ENCODE measurements at regions of chr9 and their contacts with region 1.

Region 1: DNA sequence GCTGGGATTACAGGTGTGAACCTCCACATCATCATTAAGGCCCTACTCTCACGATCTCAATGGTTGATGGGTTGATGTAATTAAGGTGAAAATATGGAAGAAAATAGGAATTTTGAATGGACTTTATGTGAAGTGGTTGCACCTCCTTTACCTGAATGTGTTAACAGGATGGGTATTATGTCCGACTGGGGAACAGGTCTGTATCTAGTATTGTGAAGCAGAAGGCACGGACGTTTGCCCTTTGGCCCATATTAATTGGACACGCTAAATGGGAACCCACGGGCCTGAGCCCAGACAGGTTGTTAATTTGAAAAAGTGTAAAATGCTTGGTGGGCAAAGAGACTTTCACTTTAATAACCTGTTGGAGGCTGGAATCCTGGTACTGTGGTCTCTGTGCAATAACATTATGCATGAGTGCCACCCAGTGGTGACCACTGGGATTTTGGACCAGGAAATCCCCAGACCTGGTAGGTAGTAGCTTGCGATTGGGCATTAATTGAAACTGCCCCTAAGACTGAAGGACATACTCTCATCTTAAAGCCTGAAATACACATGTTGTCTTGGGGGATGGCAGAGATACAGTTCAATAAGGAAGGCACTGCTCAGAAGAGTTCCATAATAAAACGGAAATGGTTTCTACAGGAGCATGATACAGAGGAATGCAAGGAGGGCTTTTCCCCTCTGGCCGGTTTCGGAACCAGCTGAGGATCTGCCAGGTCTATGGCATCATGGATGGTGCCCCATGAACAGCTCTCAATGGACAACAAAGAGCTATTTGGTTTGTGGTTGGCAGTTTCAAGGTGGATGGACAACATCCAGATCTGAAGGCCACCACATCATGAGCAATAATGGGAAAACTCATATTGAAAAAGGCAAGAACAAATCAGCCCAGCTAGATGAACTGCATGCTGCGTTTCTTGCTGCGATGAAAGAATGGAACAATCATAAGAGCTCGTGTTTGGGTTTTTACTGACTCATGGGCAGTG is 26.2 kb upstream of the BICD2 start:
- DNase-seq: peak in 1 of 2 experiments; percentile 87
- H3K4me3 ChIP-seq: no peak overlapping the region
- H3K27ac ChIP-seq: no peak overlapping the region
- H3K4me1 ChIP-seq: peaks cover 0 to 2% (median 0%) of the 10 kb centered on the region in 4 experiments; a peak in 1 of 7 replicates
- H3K27me3 ChIP-seq: no peaks in the 10 kb centered on the region
- CTCF ChIP-seq: peak; percentile 65 to 90 (median 86)
- EP300 ChIP-seq: no peak
- POLR2A ChIP-seq: no peak
- RAD21 ChIP-seq: peak; percentile 94 to 97

Region 2: DNA sequence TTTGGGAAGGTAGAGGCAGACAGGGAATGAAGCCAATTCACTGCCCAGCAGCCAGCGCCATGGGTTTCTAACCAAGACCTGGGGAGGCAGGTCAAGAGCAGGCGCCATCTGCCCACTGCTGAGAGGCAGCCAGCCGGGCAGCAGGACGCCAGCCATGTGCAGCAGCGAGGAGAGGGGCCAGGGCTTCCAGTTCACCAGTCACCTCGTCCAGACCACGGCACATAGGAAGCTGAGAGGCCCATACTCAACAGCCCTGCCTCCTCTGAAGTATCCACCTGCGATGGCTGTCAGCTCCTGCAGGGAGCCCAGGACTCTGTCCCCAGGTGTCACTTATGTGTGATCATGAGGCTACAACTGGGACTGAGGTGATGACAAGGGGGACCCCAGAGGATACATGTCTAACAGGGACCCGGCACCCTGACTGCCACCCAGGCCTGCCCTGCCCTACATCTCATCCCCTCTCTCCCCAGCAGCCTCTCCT is 151.0 kb before region 1 on chr9:
- CTCF ChIA-PET with region 1: no interaction called
- POLR2A ChIA-PET with region 1: no interaction called
- DNase-seq: no peak
- H3K4me3 ChIP-seq: no peak overlapping the region
- H3K27ac ChIP-seq: no peak overlapping the region
- H3K4me1 ChIP-seq: no peaks in the 10 kb centered on the region
- H3K27me3 ChIP-seq: no peaks in the 10 kb centered on the region
- CTCF ChIP-seq: no peak
- EP300 ChIP-seq: no peak
- POLR2A ChIP-seq: no peak
- RAD21 ChIP-seq: no peak

Region 3: GRCh38 chr9:92728831-92729734 is 61.8 kb before region 1 on chr9:
- CTCF ChIA-PET with region 1: interaction called, 142 read pairs
- POLR2A ChIA-PET with region 1: no interaction called
- DNase-seq: peak in 1 of 2 experiments; percentile 39
- H3K4me3 ChIP-seq: no peak overlapping the region
- H3K27ac ChIP-seq: no peak overlapping the region
- H3K4me1 ChIP-seq: peaks cover 0 to 1% (median 0%) of the 10 kb centered on the region in 4 experiments; a peak in 1 of 7 replicates
- H3K27me3 ChIP-seq: no peaks in the 10 kb centered on the region
- CTCF ChIP-seq: peak; percentile 64 to 66 (median 66)
- EP300 ChIP-seq: no peak
- POLR2A ChIP-seq: no peak
- RAD21 ChIP-seq: peak; percentile 65 to 69

Region 4: DNA sequence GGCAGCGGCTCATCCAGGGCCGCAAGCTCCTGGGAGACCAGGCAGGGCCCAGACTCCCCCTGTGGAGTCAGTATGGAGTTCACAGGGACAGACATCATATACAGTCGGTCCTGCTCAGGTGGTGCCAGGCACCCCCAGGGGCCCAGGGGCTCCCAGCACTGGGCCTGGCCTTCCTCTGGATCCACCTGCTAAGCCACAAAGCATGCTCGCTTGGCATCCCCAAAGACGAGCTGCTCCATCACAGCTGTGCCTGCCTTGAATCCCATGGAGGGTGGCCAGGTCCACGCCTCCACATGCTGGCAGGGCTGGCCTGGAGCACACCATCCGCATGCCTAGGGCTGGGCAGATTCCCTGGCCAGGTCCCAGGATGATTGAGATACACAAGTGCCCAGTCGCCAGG is 30.8 kb before region 1 on chr9:
- CTCF ChIA-PET with region 1: interaction called, 14 read pairs
- POLR2A ChIA-PET with region 1: interaction called, 3 read pairs
- DNase-seq: no peak
- H3K4me3 ChIP-seq: no peak overlapping the region
- H3K27ac ChIP-seq: no peak overlapping the region
- H3K4me1 ChIP-seq: peaks cover 6 to 28% (median 12%) of the 10 kb centered on the region in 4 experiments
- H3K27me3 ChIP-seq: no peaks in the 10 kb centered on the region
- CTCF ChIP-seq: no peak
- EP300 ChIP-seq: no peak
- POLR2A ChIP-seq: no peak
- RAD21 ChIP-seq: no peak

Region 5: GRCh38 chr9:92770360-92770995 is 20.4 kb before region 1 on chr9:
- CTCF ChIA-PET with region 1: interaction called, 13 read pairs
- POLR2A ChIA-PET with region 1: no interaction called
- DNase-seq: no peak
- H3K4me3 ChIP-seq: no peak overlapping the region
- H3K27ac ChIP-seq: peak overlapping the region; percentile 38; the same call in 1 of the 2 replicates
- H3K4me1 ChIP-seq: peaks cover 0 to 11% (median 3%) of the 10 kb centered on the region in 4 experiments; a peak in 3 of 7 replicates
- H3K27me3 ChIP-seq: no peaks in the 10 kb centered on the region
- CTCF ChIP-seq: no peak
- EP300 ChIP-seq: no peak
- POLR2A ChIP-seq: peak in 1 of 2 experiments; percentile 51; a peak in 1 of 3 replicates
- RAD21 ChIP-seq: no peak

Region 6: GRCh38 chr9:92780206-92780605 is 10.6 kb before region 1 on chr9:
- CTCF ChIA-PET with region 1: interaction called, 15 read pairs
- POLR2A ChIA-PET with region 1: no interaction called
- DNase-seq: no peak
- H3K4me3 ChIP-seq: no peak overlapping the region
- H3K27ac ChIP-seq: no peak overlapping the region
- H3K4me1 ChIP-seq: no peaks in the 10 kb centered on the region
- H3K27me3 ChIP-seq: no peaks in the 10 kb centered on the region
- CTCF ChIP-seq: no peak
- EP300 ChIP-seq: no peak
- POLR2A ChIP-seq: no peak
- RAD21 ChIP-seq: no peak

Region 7: GRCh38 chr9:92947268-92948047 is 156.6 kb after region 1 on chr9 and contains the start of gene FGD3:
- CTCF ChIA-PET with region 1: no interaction called
- POLR2A ChIA-PET with region 1: no interaction called
- DNase-seq: peak in 1 of 2 experiments; percentile 68
- H3K4me3 ChIP-seq: peak within 1 kb of the TSS; percentile 24 to 59 (median 34)
- H3K27ac ChIP-seq: no peak within 1 kb of the TSS
- H3K4me1 ChIP-seq: peaks cover 0 to 7% (median 3%) of the 10 kb centered on the region in 4 experiments; a peak in 3 of 7 replicates
- H3K27me3 ChIP-seq: peaks cover 0 to 5% (median 0%) of the 10 kb centered on the region in 4 experiments; a peak in 1 of 7 replicates
- CTCF ChIP-seq: no peak
- EP300 ChIP-seq: no peak
- POLR2A ChIP-seq: no peak
- RAD21 ChIP-seq: no peak
- total RNA-seq, gene FGD3: 1.4 and 1.9 TPM in 2 replicates

Measured in H1 (cell line).